Activated T-helper 2 cell treated with anti-CD3 and anti-CD28 coated beads, Interferon-gamma antibody, Interleukin-2, Interleukin-4, amounts not matched to agents 10 μg/mL and 5 μg/mL and 100 μg/mL, durations not matched to agents 14 hours and 24 hours and 36 hours (primary cell): ENCODE measurements at regions of chr16 and their contacts with region 1.

Region 1: DNA sequence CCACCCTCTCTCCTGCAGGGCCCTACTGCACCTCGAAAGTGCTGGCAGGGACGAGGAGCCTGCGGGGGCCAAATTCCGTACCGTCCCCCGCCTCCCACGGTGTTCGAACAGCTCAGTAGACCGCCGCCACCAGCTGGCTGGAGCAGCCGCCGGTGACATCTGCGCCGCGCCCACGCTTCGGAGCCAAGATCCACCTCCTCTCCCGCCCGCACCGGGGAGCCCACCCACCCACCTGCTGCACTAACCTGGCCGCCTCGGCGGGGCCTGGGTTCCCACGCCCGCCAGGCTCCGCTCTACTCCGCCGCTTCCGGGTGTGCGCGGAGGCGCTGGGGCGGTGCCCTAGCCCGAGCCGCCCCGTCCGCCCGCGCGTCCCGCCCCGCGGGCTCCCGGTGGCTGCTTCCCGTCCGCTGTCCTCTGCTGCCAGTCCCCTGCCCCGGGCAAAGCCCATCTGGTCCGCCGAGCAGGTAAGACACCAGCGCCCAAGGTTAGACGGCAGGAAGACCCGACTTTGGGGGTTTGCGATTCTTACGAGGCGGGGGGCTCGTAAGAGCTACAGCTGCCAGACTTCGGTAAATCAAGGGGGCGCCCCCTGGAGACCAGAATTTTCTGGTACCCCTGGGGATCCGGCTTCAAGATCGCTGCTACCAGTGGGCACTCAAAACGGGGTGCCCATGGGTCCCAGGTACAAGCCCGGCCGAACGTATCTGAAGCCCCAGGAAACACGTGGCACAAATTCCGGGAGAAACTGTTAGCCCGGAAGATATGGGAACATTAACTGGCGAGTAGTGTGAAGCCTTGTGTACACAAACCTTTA is at the starts of genes FBXL8 and TRADD:
- DNase-seq: peak; percentile 79
- H3K4me3 Mint-ChIP-seq: peak within 1 kb of the TSS; percentile 91
- H3K27ac Mint-ChIP-seq: peak within 1 kb of the TSS; percentile 85
- H3K4me1 Mint-ChIP-seq: peaks cover 44% of the 10 kb centered on the region
- H3K27me3 Mint-ChIP-seq: peaks cover 8% of the 10 kb centered on the region
- total RNA-seq, gene FBXL8: 26.4 and 26.7 TPM in 2 replicates
- total RNA-seq, gene TRADD: 35.0 and 38.3 TPM in 2 replicates

Region 2: GRCh38 chr16:65655802-65656201 is 1504.0 kb before region 1 on chr16:
- intact Hi-C with region 1: no loop called
- DNase-seq: no peak
- H3K4me3 Mint-ChIP-seq: no peak overlapping the region
- H3K27ac Mint-ChIP-seq: no peak overlapping the region
- H3K4me1 Mint-ChIP-seq: no peaks in the 10 kb centered on the region
- H3K27me3 Mint-ChIP-seq: no peaks in the 10 kb centered on the region

Region 3: GRCh38 chr16:66562407-66562806 is 597.4 kb before region 1 on chr16:
- intact Hi-C with region 1: no loop called
- DNase-seq: no peak
- H3K4me3 Mint-ChIP-seq: no peak overlapping the region
- H3K27ac Mint-ChIP-seq: peak overlapping the region; percentile 58
- H3K4me1 Mint-ChIP-seq: peaks cover 52% of the 10 kb centered on the region
- H3K27me3 Mint-ChIP-seq: no peaks in the 10 kb centered on the region

Region 4: GRCh38 chr16:66872943-66873684 is 286.7 kb before region 1 on chr16:
- intact Hi-C with region 1: loop called (anchors 10 kb)
- DNase-seq: peak; percentile 93
- H3K4me3 Mint-ChIP-seq: peak overlapping the region; percentile 82
- H3K27ac Mint-ChIP-seq: peak overlapping the region; percentile 92
- H3K4me1 Mint-ChIP-seq: peaks cover 43% of the 10 kb centered on the region
- H3K27me3 Mint-ChIP-seq: no peaks in the 10 kb centered on the region

Region 5: GRCh38 chr16:66977341-66978113 is 182.3 kb before region 1 on chr16:
- intact Hi-C with region 1: loop called (anchors 1 kb)
- DNase-seq: peak; percentile 83
- H3K4me3 Mint-ChIP-seq: no peak overlapping the region
- H3K27ac Mint-ChIP-seq: peak overlapping the region; percentile 68
- H3K4me1 Mint-ChIP-seq: peaks cover 50% of the 10 kb centered on the region
- H3K27me3 Mint-ChIP-seq: no peaks in the 10 kb centered on the region

Region 6: DNA sequence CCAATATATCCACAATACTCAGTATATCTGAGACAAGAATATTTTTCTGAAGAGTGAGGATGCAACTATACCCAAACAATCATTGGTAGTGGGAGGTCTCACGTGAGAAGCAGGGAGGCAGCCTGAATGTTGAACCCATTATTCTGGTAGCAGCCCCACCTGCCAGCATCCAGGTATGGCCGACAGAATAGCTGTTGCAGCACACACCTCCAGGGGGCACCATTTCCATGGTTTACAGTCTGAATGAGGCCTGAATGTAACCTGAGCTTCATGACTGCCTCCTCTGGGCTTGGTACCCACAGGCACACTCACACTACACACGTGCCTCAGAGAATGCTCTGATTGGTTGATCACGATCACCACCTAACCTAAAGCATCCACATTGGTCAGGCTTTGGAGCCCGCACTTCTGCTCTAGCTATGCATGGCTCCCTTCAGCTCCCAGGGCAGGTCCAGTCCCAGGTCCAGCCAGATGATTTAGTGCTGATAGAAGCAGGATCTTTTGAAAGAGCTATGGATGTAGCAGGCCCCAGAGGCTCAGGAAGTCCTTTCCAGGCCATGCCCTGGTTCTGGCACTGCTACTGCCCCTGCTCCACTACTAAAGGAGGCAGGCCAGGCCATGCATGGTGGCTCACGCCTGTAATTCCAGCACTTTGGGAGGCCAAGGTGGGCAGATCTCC is 141.9 kb before region 1 on chr16:
- intact Hi-C with region 1: loop called (anchors 1 kb)
- DNase-seq: peak; percentile 86
- H3K4me3 Mint-ChIP-seq: no peak overlapping the region
- H3K27ac Mint-ChIP-seq: peak overlapping the region; percentile 38
- H3K4me1 Mint-ChIP-seq: peaks cover 35% of the 10 kb centered on the region
- H3K27me3 Mint-ChIP-seq: no peaks in the 10 kb centered on the region

Region 7: DNA sequence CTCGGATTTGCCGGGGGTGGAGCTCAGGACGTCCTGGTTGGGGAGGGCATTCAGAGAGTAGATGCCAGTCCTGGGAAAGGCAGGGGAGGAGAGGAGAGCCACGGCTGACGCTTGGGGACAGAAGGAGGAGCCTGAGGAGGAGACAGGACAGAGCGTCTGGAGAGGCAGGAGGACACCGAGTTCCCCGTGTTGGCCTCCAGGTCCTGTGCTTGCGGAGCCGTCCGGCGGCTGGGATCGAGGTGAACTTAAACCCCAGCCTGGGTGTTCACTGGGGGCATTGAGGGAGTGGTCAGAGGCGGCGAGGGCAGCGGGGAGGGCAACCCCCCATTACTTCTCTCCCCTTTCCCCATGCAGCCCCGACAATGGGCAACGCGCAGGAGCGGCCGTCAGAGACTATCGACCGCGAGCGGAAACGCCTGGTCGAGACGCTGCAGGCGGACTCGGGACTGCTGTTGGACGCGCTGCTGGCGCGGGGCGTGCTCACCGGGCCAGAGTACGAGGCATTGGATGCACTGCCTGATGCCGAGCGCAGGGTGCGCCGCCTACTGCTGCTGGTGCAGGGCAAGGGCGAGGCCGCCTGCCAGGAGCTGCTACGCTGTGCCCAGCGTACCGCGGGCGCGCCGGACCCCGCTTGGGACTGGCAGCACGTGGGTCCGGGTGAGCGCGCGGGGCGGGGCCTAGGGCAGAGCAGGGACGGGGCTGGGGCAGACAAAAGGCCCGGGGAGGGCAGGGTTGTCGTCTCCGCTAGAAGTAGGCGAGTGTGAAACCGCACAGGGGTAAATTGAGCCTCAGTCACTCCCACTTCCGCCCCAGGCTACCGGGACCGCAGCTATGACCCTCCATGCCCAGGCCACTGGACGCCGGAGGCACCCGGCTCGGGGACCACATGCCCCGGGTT is 14.3 kb after region 1 on chr16:
- intact Hi-C with region 1: loop called (anchors 1 kb)
- DNase-seq: peak; percentile 74
- H3K4me3 Mint-ChIP-seq: peak overlapping the region; percentile 83
- H3K27ac Mint-ChIP-seq: peak overlapping the region; percentile 56
- H3K4me1 Mint-ChIP-seq: peaks cover 48% of the 10 kb centered on the region
- H3K27me3 Mint-ChIP-seq: peaks cover 8% of the 10 kb centered on the region

Region 8: GRCh38 chr16:67226804-67227557 is 67.2 kb after region 1 on chr16 and contains the start of gene TMEM208:
- intact Hi-C with region 1: loop called (anchors 2 kb)
- DNase-seq: peak; percentile 99
- H3K4me3 Mint-ChIP-seq: peak within 1 kb of the TSS; percentile 98
- H3K27ac Mint-ChIP-seq: peak within 1 kb of the TSS; percentile 93
- H3K4me1 Mint-ChIP-seq: peaks cover 40% of the 10 kb centered on the region
- H3K27me3 Mint-ChIP-seq: no peaks in the 10 kb centered on the region
- total RNA-seq, gene TMEM208: 53.8 and 55.4 TPM in 2 replicates